Activated CD4-positive, alpha-beta T cell treated with anti-CD3 and anti-CD28 coated beads for 36 hours (primary cell): ENCODE measurements at regions of chr19 and their contacts with region 1.

Region 1: DNA sequence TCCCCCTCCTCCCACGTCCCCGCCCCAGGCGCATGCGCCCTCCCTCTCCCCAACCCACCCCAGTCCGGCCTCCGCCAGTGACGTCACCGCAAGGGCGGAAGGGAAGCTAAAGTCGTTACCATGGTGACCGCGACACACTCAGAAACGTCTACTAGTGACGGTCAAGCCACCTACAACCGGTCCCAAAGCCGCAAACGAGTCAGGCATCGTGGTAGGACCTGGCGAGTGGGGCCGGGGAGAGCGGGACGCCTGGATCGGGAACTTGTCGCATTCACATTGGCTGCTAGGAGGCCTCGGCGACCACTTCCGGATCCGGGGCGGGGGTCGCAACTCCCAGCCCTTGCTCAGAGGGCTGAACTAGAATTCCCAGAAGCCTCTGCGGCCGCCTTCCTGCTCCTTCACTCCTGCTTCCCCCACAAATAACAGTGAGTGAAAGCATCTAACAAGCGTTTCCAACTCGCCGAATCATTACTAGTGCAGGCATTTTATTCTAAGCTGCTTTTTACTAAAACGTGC is at the start of gene ZSCAN5A:
- DNase-seq: peak; percentile 99
- ATAC-seq: peak; percentile 80
- H3K4me3 Mint-ChIP-seq: peak within 1 kb of the TSS; percentile 83
- H3K27ac Mint-ChIP-seq: peak within 1 kb of the TSS; percentile 100
- H3K4me1 Mint-ChIP-seq: peaks cover 23% of the 10 kb centered on the region
- H3K27me3 Mint-ChIP-seq: no peaks in the 10 kb centered on the region
- total RNA-seq, gene ZSCAN5A: 8.3 to 9.9 TPM

Region 2: DNA sequence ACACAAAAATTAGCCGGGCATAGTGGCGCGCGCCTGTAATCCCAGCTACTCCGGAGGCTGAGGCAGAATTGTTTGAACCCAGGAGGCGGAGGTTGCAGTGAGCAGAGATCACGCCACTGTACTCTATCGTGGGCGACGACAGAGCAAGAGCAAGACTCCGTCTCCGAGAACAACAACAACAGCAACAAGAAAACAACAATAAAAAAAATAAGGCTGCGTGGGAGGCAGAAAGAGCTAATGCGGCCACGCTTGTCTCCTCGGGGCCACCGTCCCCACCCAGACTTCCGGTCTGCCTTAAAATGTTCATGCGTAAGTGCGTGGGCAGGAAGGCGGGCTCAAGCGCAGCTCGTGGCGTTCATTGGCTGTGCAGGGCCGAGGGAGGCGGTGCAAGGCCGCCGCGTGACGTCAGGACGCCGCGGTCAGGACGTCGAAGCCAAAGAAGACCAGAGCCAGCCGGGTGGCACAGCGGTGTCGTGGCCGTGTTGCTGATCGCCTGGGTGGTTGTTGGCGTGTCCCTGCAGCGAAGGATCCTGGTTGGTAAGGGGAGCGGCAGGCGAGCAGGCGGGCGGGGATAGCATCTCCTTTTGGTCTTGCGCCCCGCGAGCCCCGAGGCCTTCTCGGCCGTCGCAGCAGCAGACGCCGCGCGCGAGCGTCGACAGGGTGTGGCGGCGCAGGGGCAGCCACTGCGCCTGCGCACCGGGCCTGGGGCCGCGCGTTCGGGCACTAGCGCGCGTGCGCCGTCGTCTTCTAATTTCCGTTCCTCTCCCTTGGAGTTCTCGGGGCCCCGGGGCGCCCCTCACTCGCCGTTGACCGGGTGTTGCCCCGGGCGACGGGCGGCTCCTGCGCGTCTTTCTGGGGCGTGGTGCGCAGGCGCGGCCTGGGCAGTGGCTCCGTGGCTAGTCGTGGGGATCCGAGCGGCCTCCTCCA is 1865.6 kb before region 1 on chr19 and contains the start of gene LENG8:
- CTCF ChIA-PET with region 1: no interaction called
- POLR2A ChIA-PET with region 1: no interaction called
- intact Hi-C with region 1: loop called in 1 of 2 experiments (anchors 5 kb)
- DNase-seq: peak; percentile 98
- ATAC-seq: peak; percentile 92
- H3K4me3 Mint-ChIP-seq: peak within 1 kb of the TSS; percentile 98
- H3K27ac Mint-ChIP-seq: peak within 1 kb of the TSS; percentile 98
- H3K4me1 Mint-ChIP-seq: peaks cover 36% of the 10 kb centered on the region
- H3K27me3 Mint-ChIP-seq: no peaks in the 10 kb centered on the region
- total RNA-seq, gene LENG8: 156 to 221 TPM

Region 3: DNA sequence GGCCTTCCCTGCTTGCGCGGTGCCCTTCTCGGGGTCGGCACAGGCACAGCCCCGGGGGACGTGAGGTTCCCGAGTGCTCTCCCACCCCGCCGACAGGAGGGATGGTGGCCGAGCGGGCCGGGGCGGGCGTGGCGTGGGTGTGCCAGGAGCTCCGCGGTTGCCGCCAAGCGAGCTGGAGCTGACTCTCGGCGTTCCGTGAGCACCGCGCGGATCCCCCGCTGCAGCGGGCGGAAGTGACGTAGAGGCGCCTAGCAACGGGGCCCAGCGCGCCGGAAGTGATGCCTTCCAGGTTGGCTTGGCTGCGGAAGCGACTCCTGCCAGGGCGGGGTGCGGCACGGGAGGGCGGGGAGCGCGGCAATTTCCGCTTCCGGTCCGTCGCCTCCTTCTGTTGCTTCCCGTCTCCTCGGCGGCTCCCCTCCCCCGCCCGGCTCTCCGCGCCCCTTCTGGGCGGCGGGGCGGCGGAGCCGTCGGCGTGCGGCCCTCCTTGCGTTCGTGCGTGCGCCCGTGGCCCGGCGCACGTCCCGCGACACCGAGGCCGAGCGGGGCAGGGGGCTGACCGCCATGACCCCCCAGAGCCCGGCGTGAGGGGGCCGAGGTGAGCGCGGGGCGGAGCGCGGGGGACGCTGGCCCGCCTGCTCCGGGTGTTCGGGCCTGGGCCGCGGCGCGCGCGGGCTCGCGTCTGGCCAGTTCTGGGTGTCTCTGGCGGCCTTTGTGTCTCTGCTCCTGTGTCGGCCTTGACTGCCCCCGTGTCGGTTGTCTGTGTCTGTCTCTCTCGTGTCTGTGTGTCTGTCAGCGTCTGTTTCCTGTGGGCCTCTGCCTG is 639.6 kb before region 1 on chr19 and contains the start of gene EPN1:
- CTCF ChIA-PET with region 1: no interaction called
- POLR2A ChIA-PET with region 1: no interaction called
- intact Hi-C with region 1: loop called in 1 of 2 experiments (anchors 2 kb)
- DNase-seq: peak; percentile 99
- ATAC-seq: peak; percentile 91
- H3K4me3 Mint-ChIP-seq: peak within 1 kb of the TSS; percentile 95
- H3K27ac Mint-ChIP-seq: peak within 1 kb of the TSS; percentile 96
- H3K4me1 Mint-ChIP-seq: peaks cover 63% of the 10 kb centered on the region
- H3K27me3 Mint-ChIP-seq: no peaks in the 10 kb centered on the region
- total RNA-seq, gene EPN1: 32.5 to 37.1 TPM

Region 4: GRCh38 chr19:56367829-56368711 is 53.5 kb after region 1 on chr19:
- CTCF ChIA-PET with region 1: interaction called, 4 read pairs
- POLR2A ChIA-PET with region 1: no interaction called
- intact Hi-C with region 1: loop called in 1 of 2 experiments (anchors 1 kb)
- DNase-seq: peak; percentile 92
- ATAC-seq: peak; percentile 99
- H3K4me3 Mint-ChIP-seq: peak overlapping the region; percentile 95
- H3K27ac Mint-ChIP-seq: peak overlapping the region; percentile 89
- H3K4me1 Mint-ChIP-seq: peaks cover 19% of the 10 kb centered on the region
- H3K27me3 Mint-ChIP-seq: no peaks in the 10 kb centered on the region

Region 5: DNA sequence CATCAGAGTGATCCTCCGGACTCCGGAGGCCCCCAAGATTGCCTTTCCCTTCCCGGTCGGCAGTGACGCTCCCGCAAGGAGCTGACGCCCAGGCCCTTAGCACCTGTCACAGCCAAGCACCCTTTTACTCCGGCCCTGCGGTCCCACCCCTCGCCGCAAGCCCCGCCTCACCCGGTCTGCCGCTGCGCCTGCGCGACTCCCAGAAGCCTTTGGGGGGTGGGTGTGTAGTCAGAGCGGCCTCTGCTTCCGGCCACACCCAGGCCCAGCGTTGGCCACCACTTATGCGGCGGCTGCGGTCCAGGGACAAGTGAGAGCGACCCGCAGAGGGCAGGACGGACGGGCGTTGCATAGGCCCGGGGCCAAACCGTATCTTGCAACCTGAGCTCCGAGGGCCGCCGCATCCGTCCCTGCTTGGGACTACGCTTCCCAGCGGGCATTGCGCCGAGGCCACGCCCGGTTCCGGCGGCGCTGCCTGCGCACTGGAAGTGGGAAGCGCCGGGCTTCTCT is 223.7 kb after region 1 on chr19:
- CTCF ChIA-PET with region 1: no interaction called
- POLR2A ChIA-PET with region 1: no interaction called
- intact Hi-C with region 1: loop called in 1 of 2 experiments (anchors 1 kb)
- DNase-seq: peak; percentile 95
- ATAC-seq: peak; percentile 97
- H3K4me3 Mint-ChIP-seq: peak overlapping the region; percentile 74
- H3K27ac Mint-ChIP-seq: peak overlapping the region; percentile 87
- H3K4me1 Mint-ChIP-seq: peaks cover 15% of the 10 kb centered on the region
- H3K27me3 Mint-ChIP-seq: no peaks in the 10 kb centered on the region

Region 6: GRCh38 chr19:57362997-57363705 is 1048.5 kb after region 1 on chr19 and contains the starts of genes TRAPPC2B and ZNF547:
- CTCF ChIA-PET with region 1: no interaction called
- POLR2A ChIA-PET with region 1: no interaction called
- intact Hi-C with region 1: loop called in 1 of 2 experiments (anchors 1 kb)
- DNase-seq: peak; percentile 99
- ATAC-seq: peak; percentile 98
- H3K4me3 Mint-ChIP-seq: peak within 1 kb of the TSS; percentile 86
- H3K27ac Mint-ChIP-seq: peak within 1 kb of the TSS; percentile 94
- H3K4me1 Mint-ChIP-seq: peaks cover 13% of the 10 kb centered on the region
- H3K27me3 Mint-ChIP-seq: no peaks in the 10 kb centered on the region
- total RNA-seq, gene TRAPPC2B: 3.2 to 6.1 TPM
- total RNA-seq, gene ZNF547: 1.5 to 1.7 TPM